ENCODE measurements at regions of chr19 and their contacts with region 1.

Region 1: DNA sequence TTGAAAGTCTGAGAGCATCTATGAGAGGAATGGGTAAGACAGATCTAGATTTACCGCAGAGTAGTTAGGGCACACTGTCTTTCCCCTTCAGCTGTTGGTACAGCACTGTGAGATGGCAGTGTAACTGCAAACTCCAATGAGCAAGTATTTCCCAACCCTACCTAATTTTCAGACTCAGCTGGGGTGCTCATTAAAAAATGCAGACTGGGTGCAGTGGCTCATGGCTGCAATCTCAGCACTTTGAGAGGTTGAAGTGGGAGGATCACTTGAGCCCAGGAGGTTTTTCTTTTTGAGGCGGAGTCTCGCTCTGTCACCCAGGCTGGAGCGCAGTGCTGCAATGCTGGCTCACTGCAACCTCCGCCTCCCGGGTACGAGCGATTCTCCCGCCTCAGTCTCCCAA is 12.6 kb downstream of the QPCTL start:
- DNase-seq: no peak
- ATAC-seq: no peak
- H3K4me3 ChIP-seq: no peak overlapping the region
- H3K27ac ChIP-seq: 0 out of 2 replicates have a peak overlapping the region, but pooled peaks have one; percentile 26
- H3K4me1 ChIP-seq: peaks cover 19% of the 10 kb centered on the region
- H3K27me3 ChIP-seq: no peaks in the 10 kb centered on the region
- CTCF ChIP-seq: no peak
- EP300 ChIP-seq: no peak
- POLR2A ChIP-seq: no peak
- RAD21 ChIP-seq: no peak

Region 2: DNA sequence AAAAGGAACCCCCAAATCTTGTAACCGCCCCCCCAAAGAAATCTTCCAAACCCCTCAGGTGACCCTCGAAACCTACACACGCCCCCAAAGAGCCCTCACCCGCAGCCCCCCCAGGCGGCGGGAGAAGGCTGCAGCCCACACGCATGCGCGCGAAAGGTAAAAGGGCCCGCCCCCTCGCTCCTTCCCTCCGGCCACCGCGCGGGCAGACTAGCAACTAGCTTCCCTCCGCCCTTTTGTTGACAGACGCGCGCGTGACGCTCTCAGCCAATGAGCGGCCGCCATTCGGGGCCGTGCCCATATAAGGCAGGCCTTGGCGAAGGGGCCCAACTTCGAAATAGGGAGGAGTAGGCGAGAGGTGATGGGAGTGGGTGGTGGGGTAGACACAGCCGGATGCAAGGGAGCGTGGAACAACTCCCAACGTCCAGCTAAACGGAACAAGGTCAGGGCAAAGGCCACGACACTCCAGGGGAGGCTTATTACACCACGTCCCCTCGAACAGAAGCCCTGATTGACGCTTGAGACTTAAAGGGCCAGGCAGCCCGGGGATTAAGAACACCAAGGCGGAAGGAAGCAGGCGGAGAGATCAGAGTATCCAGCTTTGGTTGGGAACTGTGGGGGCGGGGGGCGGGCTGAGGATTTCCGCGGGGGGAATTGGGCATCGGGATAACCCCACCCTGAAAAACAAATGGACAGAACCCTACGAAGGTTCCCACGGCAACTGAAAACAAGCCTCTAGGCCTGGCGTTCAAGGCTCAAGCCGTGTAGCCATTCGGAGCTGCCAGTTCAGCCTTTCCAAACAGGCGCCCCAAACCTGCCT is 12.3 kb after region 1 on chr19:
- CTCF ChIA-PET with region 1: interaction called, 20 read pairs
- POLR2A ChIA-PET with region 1: interaction called, 49 read pairs
- RAD21 ChIA-PET with region 1: interaction called, 20 read pairs
- SMC1A ChIA-PET with region 1: interaction called, 27 read pairs
- in situ Hi-C with region 1: no loop called
- intact Hi-C with region 1: no loop called
- DNase-seq: peak; percentile 99
- ATAC-seq: peak; percentile 99
- H3K4me3 ChIP-seq: peak overlapping the region; percentile 95
- H3K27ac ChIP-seq: peak overlapping the region; percentile 97
- H3K4me1 ChIP-seq: peaks cover 13% of the 10 kb centered on the region
- H3K27me3 ChIP-seq: no peaks in the 10 kb centered on the region
- CTCF ChIP-seq: peak; percentile 21 to 31 (median 25); a peak in 4 of 6 replicates
- EP300 ChIP-seq: peak in 1 of 2 experiments; percentile 51; a peak in 2 of 4 replicates
- POLR2A ChIP-seq: peak; percentile 70
- RAD21 ChIP-seq: no peak

Region 3: GRCh38 chr19:45785781-45786532 is 80.8 kb after region 1 on chr19:
- CTCF ChIA-PET with region 1: no interaction called
- POLR2A ChIA-PET with region 1: no interaction called
- RAD21 ChIA-PET with region 1: no interaction called
- SMC1A ChIA-PET with region 1: no interaction called
- in situ Hi-C with region 1: no loop called
- intact Hi-C with region 1: no loop called
- DNase-seq: no peak
- ATAC-seq: no peak
- H3K4me3 ChIP-seq: no peak overlapping the region
- H3K27ac ChIP-seq: no peak overlapping the region
- H3K4me1 ChIP-seq: peaks cover 5% of the 10 kb centered on the region
- H3K27me3 ChIP-seq: no peaks in the 10 kb centered on the region
- CTCF ChIP-seq: no peak
- EP300 ChIP-seq: no peak
- POLR2A ChIP-seq: peak; percentile 51; the same call in 1 of the 2 replicates
- RAD21 ChIP-seq: no peak

Region 4: DNA sequence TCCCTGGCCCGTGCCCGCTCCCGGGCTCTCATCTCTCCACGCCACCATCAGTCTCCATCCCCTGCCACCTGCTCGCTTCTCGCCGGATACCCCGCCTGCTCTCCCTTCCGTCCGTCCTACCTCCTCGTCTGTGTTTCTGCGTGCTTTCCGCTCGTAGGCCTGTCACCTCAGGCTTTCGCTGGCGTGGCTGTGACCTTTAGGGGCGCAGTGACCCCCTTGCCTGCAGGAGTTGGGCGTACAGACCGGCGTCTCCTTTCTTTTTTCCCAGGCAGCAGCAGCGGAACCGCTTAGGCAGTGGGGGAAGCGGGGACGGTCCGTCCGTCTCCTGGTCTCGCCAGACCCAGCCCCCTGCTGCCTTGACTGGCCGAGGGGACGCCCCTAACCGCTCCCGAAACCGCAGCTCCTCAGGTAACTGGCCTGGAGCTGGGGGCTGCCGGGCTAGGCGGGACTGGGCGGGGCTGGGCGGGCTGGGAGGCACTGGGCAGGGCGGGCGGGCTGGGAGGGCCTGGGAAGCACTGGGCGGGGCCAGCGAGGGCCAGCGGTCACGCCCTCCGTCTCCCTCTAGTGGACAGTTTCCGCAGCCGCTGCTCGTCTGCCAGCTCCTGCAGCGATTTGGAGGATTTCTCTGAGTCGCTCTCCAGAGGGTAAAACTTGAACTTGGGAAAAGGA is 311.4 kb after region 1 on chr19:
- CTCF ChIA-PET with region 1: no interaction called
- POLR2A ChIA-PET with region 1: no interaction called
- RAD21 ChIA-PET with region 1: no interaction called
- SMC1A ChIA-PET with region 1: no interaction called
- in situ Hi-C with region 1: no loop called
- intact Hi-C with region 1: no loop called
- DNase-seq: peak; percentile 11
- ATAC-seq: peak; percentile 89
- H3K4me3 ChIP-seq: peak overlapping the region; percentile 74; the same call in 1 of the 2 replicates
- H3K27ac ChIP-seq: no peak overlapping the region
- H3K4me1 ChIP-seq: peaks cover 5% of the 10 kb centered on the region
- H3K27me3 ChIP-seq: no peaks in the 10 kb centered on the region
- CTCF ChIP-seq: peak; percentile 72 to 88 (median 77)
- EP300 ChIP-seq: no peak
- POLR2A ChIP-seq: no peak
- RAD21 ChIP-seq: peak; percentile 31; the same call in 1 of the 2 replicates

Region 5: GRCh38 chr19:46361915-46362314 is 656.8 kb after region 1 on chr19:
- CTCF ChIA-PET with region 1: no interaction called
- POLR2A ChIA-PET with region 1: no interaction called
- RAD21 ChIA-PET with region 1: no interaction called
- SMC1A ChIA-PET with region 1: no interaction called
- in situ Hi-C with region 1: no loop called
- intact Hi-C with region 1: no loop called
- DNase-seq: no peak
- ATAC-seq: no peak
- H3K4me3 ChIP-seq: no peak overlapping the region
- H3K27ac ChIP-seq: no peak overlapping the region
- H3K4me1 ChIP-seq: no peaks in the 10 kb centered on the region
- H3K27me3 ChIP-seq: no peaks in the 10 kb centered on the region
- CTCF ChIP-seq: no peak
- EP300 ChIP-seq: no peak
- POLR2A ChIP-seq: no peak
- RAD21 ChIP-seq: no peak